GM10248 (cell line): ENCODE measurements at regions of chr13 and their contacts with region 1.

Region 1: GRCh38 chr13:42110410-42111155 is 62.1 kb downstream of the DGKH start:
- DNase-seq: peak; percentile 51
- CTCF ChIP-seq: peak; percentile 42

Region 2: DNA sequence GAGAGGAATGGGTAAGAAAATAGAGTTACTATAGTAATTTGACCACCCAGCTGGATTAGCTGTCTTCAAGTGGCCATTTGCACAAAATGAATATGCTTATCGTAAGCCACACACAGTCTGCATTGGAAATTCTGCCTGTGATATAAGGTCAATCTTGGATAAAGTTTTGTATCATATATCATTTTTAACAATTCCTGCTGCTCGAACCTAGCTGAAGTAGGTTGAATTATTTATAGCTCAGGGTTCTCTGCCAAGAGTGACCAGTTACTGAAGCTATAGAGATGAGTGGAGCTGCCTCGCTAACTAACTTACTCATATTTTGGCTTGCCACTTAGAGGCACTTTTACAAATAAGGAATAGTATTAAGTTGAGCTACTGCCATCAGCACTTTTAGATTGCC is 432.3 kb before region 1 on chr13:
- CTCF ChIA-PET with region 1: interaction called, 17 read pairs
- POLR2A ChIA-PET with region 1: no interaction called
- DNase-seq: no peak
- CTCF ChIP-seq: no peak

Region 3: DNA sequence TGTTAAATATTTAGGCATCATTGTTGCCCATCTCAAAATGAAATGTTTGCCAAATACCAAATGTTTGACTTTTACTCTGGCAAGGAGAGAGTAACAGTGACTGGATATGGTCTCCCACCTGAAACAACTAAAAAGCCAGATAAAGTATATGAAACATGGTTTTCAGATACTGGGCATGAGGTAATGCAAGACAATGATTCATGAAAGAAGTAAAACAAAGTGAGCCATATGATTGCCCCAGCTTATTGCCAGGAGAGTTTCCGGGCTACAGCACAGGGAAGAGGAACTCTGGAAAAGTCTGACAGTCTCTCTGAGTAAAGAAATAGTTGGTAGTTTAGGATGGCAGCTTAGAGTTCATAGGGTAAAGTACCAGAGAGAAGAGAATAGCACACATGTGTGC is 1267.4 kb after region 1 on chr13:
- CTCF ChIA-PET with region 1: no interaction called
- POLR2A ChIA-PET with region 1: no interaction called
- DNase-seq: no peak
- CTCF ChIP-seq: no peak